ENCODE measurements at regions of chr3 and their contacts with region 1.

Region 1: GRCh38 chr3:184017672-184018423 is at the start of gene ABCC5:
- DNase-seq: peak; percentile 97
- total RNA-seq, gene ABCC5: 34.6 TPM

Region 2: DNA sequence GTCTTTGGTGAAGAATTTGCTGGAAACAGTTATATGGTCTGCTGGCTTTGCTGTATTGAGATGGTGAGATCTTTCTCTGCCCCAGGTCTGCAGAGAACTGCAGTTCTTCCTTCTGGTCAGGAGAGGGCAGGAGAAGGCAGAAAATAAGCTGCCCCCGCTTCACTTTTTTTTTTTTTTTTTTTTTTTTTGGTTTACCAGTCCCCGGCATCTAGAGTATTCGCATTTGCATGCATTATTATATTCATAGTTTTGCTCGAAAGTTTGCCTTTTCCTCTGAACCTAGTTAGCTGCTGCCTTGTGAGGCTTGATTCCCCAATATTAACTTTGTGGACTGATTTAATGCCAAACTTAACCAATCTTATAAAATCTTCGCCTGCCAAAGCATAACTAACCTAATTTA is 122.6 kb before region 1 on chr3:
- intact Hi-C with region 1: loop called (anchors 2 kb)
- DNase-seq: no peak

Region 3: DNA sequence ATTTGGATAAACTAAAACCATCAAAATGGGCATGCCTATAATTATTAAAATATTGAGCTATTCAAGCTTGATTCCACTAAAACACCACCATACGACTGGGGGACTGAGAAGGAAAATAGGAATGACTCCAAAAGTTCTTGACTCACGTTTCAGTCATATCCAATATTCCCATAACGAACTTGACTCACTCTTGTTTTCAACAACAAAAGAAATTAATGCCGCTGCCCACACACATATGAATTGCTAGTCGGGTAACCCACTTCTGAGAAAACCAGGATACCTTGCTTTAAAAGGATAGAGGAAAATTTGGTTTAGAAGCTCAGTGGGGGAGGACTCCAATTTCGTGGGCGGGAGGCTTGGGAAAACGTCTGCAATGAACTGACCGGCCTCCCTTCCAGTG is 40.2 kb after region 1 on chr3:
- intact Hi-C with region 1: no loop called
- DNase-seq: no peak

Region 4: GRCh38 chr3:184154885-184155643 is 137.2 kb after region 1 on chr3 and contains the start of gene DVL3:
- intact Hi-C with region 1: loop called (anchors 5 kb)
- DNase-seq: peak; percentile 84
- total RNA-seq, gene DVL3: 68.6 TPM

Region 5: GRCh38 chr3:184185461-184186308 is 167.8 kb after region 1 on chr3 and contains the start of gene ABCF3:
- intact Hi-C with region 1: loop called (anchors 2 kb)
- DNase-seq: peak; percentile 100
- total RNA-seq, gene ABCF3: 61.5 TPM